K562 (cell line): ENCODE measurements at regions of chr11 and their contacts with region 1.

Region 1: DNA sequence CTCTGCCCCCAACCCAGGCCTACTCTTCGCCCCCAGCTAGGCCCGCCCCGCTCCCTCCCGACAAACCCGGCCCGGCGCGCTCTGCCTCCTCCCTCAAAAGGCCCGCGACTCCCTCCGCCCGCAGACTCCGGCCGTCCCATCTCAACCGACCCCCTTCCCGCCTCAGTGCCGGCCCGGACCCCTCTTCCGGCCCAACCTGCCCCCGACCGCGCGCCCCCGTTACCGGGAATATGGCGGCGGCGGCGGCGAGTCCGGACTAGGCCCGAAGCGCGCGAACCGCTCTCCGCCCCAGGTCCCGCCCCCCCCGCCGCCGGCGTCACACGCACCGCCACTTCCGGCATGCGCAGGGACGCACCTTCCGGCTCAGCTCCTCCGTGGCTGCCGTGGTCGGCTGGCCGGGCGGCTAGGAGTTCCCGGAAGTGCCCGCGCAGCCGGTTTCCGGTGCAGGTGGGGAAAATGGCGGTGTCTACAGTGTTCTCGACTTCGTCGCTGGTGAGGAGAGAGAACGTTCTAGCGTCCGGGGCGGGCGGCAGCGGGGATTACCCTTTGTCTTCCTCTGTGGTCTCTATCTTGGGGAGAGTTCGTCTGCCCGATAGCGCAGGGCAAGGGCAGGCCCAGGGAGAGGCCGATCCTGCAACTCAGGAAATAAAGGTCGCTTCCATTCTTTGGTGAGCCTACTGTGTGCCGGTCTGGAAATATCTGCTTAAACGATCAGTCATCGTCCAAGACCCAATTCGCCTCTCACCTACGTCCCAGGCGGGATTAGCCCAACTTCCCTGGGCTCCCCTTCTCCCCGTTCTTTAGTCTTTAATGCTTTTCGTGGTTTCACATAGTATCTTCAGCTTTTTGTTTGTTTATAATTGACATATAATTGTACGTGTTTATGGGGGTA is at the starts of genes CPSF7 and SDHAF2:
- DNase-seq: peak; percentile 89 to 98 (median 92)
- ATAC-seq: peak; percentile 91
- H3K4me3 ChIP-seq: peak within 1 kb of the TSS; percentile 72
- H3K27ac ChIP-seq: peak within 1 kb of the TSS; percentile 98
- H3K4me1 ChIP-seq: peaks cover 4 to 7% of the 10 kb centered on the region in 2 experiments; a peak in 3 of 5 replicates
- H3K27me3 ChIP-seq: no peaks in the 10 kb centered on the region
- CTCF ChIP-seq: no peak
- EP300 ChIP-seq: no peak
- POLR2A ChIP-seq: peak; percentile 93
- RAD21 ChIP-seq: no peak
- polyA plus RNA-seq, gene CPSF7: 14.8 to 46.8 TPM
- polyA plus RNA-seq, gene SDHAF2: 140 to 144 TPM

Region 2: GRCh38 chr11:61384271-61385242 is 45.4 kb before region 1 on chr11:
- CTCF ChIA-PET with region 1: no interaction called
- POLR2A ChIA-PET with region 1: no interaction called
- in situ Hi-C with region 1: no loop called
- intact Hi-C with region 1: no loop called
- DNase-seq: peak; percentile 36 to 82 (median 54)
- ATAC-seq: peak; percentile 95
- H3K4me3 ChIP-seq: no peak overlapping the region
- H3K27ac ChIP-seq: no peak overlapping the region
- H3K4me1 ChIP-seq: peaks cover 3 to 6% of the 10 kb centered on the region in 2 experiments; a peak in 2 of 5 replicates
- H3K27me3 ChIP-seq: no peaks in the 10 kb centered on the region
- CTCF ChIP-seq: peak; percentile 84 to 97 (median 91)
- EP300 ChIP-seq: no peak
- POLR2A ChIP-seq: no peak
- RAD21 ChIP-seq: peak; percentile 89 to 98

Region 3: DNA sequence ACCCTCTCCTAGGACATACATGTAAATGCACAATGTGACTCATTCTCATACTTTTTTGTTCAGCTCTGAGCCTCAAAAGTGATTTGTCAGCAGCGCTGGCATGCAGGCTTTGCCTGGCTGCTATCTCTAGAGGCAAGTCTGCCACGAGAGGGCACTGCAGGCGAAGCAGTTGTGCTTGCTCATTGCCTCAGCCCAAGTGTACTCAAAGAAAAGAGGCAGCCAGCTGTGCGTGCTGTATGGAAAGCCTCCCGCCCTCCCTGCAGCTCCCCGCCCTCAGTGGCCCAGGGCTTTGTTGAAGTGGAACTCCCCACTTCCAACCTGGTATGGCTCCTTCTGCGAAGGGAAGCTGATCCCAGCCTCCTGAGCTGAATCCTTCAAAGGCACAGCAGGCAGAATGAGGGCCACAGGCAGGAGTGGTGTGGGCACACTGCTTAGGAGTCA is 16.3 kb after region 1 on chr11:
- CTCF ChIA-PET with region 1: no interaction called
- POLR2A ChIA-PET with region 1: interaction called, 32 read pairs
- in situ Hi-C with region 1: no loop called
- intact Hi-C with region 1: no loop called
- DNase-seq: peak; percentile 64 to 86 (median 74)
- ATAC-seq: peak; percentile 99
- H3K4me3 ChIP-seq: no peak overlapping the region
- H3K27ac ChIP-seq: no peak overlapping the region
- H3K4me1 ChIP-seq: peaks cover 0 to 4% of the 10 kb centered on the region in 2 experiments; a peak in 2 of 5 replicates
- H3K27me3 ChIP-seq: no peaks in the 10 kb centered on the region; a peak in 1 of 5 replicates
- CTCF ChIP-seq: peak; percentile 82 to 90 (median 89)
- EP300 ChIP-seq: no peak
- POLR2A ChIP-seq: no peak
- RAD21 ChIP-seq: peak; percentile 40 to 67; a peak in 3 of 4 replicates

Region 4: GRCh38 chr11:61532139-61533038 is 102.5 kb after region 1 on chr11:
- CTCF ChIA-PET with region 1: no interaction called
- POLR2A ChIA-PET with region 1: no interaction called
- in situ Hi-C with region 1: no loop called
- intact Hi-C with region 1: no loop called
- DNase-seq: peak; percentile 71 to 88 (median 85)
- ATAC-seq: peak; percentile 90
- H3K4me3 ChIP-seq: no peak overlapping the region
- H3K27ac ChIP-seq: no peak overlapping the region
- H3K4me1 ChIP-seq: peaks cover 0 to 15% of the 10 kb centered on the region in 2 experiments; a peak in 2 of 5 replicates
- H3K27me3 ChIP-seq: peaks cover 33 to 72% of the 10 kb centered on the region in 2 experiments; a peak in 4 of 5 replicates
- CTCF ChIP-seq: peak; percentile 86 to 95 (median 90)
- EP300 ChIP-seq: no peak
- POLR2A ChIP-seq: no peak
- RAD21 ChIP-seq: peak; percentile 19 to 61; a peak in 2 of 4 replicates

Region 5: DNA sequence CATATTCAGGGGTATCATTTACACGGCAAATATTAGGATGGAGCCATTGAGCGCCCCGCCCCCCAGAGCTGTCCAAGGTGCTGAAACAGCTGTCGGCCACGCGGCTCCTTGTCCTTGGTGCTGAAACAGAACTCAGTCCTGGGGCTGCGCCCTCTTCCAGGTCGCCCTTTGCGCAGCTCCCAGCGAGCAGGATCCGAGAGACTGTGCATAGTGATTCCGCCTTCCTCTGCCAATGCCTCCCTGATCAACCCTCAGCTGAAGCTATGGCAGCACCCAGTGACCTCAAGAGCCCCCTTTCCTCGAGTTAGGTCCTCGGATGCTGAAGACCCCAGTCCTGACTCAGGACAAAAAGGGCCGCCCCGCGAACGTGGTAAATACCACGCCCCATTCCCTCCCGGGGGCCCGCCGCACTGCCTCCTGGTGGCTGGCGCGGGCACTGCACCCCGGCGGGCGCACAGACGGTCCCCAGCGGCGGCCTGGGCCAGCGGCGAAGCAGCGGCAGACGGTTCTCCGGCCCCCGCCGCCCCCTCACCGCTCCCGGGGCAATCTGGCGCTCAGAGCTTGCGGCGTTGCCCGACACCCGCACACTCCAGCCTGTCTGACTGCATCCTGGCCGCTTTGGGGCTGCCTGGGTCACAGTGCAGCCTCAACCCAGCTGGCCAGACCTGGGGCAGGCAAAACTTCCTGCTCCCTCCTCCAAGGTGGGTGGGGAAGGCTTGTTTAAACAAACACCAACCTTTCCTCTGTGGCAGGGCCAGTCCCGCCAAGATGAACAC is 137.5 kb after region 1 on chr11:
- CTCF ChIA-PET with region 1: no interaction called
- POLR2A ChIA-PET with region 1: no interaction called
- in situ Hi-C with region 1: no loop called
- intact Hi-C with region 1: no loop called
- DNase-seq: peak; percentile 90 to 95 (median 94)
- ATAC-seq: peak; percentile 98
- H3K4me3 ChIP-seq: no peak overlapping the region
- H3K27ac ChIP-seq: no peak overlapping the region
- H3K4me1 ChIP-seq: peaks cover 0 to 10% of the 10 kb centered on the region in 2 experiments; a peak in 2 of 5 replicates
- H3K27me3 ChIP-seq: peaks cover 0 to 20% of the 10 kb centered on the region in 2 experiments; a peak in 2 of 5 replicates
- CTCF ChIP-seq: peak; percentile 74 to 97 (median 86)
- EP300 ChIP-seq: no peak
- POLR2A ChIP-seq: no peak
- RAD21 ChIP-seq: peak; percentile 34 to 44; a peak in 3 of 4 replicates